ENCODE measurements at regions of chr4 and their contacts with region 1.

Region 1: GRCh38 chr4:156968479-156968984 is 3.1 kb downstream of the PDGFC start:
- DNase-seq: no peak

Region 2: GRCh38 chr4:156294577-156294976 is 674.0 kb before region 1 on chr4:
- intact Hi-C with region 1: loop called (anchors 10 kb)
- DNase-seq: no peak

Region 3: GRCh38 chr4:156766846-156767245 is 201.7 kb before region 1 on chr4:
- intact Hi-C with region 1: loop called (anchors 5 kb)
- DNase-seq: no peak

Region 4: DNA sequence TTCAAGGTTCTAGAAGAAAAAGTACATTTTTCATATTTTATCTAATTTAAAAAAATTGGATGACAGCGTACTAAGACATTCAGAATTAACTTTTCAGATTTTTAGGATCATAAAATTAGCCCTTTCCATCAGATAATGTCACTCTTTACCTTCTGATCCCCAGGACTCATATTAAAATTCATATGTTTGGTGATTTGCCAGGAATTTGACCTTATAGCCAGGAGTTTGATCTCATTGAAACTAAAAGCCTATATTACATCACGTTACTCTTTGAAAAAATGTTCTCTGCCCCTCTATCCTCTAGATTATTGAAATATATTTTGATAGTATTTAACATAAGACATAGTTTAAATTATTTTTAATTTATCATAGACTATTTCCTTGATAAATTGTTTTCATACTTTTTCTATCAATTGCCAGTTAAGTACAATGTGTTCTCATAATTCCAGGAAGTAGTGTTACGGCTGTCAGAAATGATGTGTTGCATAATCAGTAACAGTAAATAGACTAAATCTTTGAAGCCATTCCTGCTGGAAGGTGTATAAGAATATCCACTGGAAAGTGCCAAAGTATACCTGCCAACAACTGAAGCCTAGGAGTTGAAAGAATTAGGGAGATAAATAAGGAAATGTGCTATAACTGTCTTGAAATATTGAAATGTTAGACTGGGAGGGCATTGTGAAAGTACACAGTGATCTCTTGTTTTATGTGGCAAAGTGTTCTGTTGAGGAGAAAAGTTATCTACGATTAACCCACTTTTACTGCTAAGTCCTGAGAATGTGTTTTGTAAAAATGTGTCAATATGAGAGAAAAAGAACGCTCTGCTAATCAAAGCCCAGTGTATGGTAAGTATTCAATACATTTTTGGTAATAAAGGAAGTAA is 36.0 kb after region 1 on chr4:
- intact Hi-C with region 1: loop called (anchors 5 kb)
- DNase-seq: no peak

Region 5: GRCh38 chr4:157075811-157076577 is 107.5 kb after region 1 on chr4 and contains the start of gene GLRB:
- intact Hi-C with region 1: loop called (anchors 5 kb)
- DNase-seq: no peak
- total RNA-seq, gene GLRB: 23.1 TPM

Region 6: GRCh38 chr4:157832596-157832995 is 864.1 kb after region 1 on chr4:
- intact Hi-C with region 1: no loop called
- DNase-seq: no peak